Natural killer cell (primary cell): ENCODE measurements at regions of chr14 and their contacts with region 1.

Region 1: GRCh38 chr14:24114536-24115450 is at the starts of genes DCAF11 and NRL:
- DNase-seq: peak; percentile 99
- ATAC-seq: peak; percentile 81 to 94 (median 83)
- H3K4me3 ChIP-seq: peak within 1 kb of the TSS; percentile 62
- H3K4me3 Mint-ChIP-seq: peak within 1 kb of the TSS; percentile 99
- H3K27ac ChIP-seq: peak within 1 kb of the TSS; percentile 100
- H3K27ac Mint-ChIP-seq: peak within 1 kb of the TSS; percentile 96 to 99
- H3K4me1 ChIP-seq: peaks cover 24% of the 10 kb centered on the region
- H3K4me1 Mint-ChIP-seq: peaks cover 22 to 27% of the 10 kb centered on the region in 2 donors
- H3K27me3 ChIP-seq: no peaks in the 10 kb centered on the region
- H3K27me3 Mint-ChIP-seq: no peaks in the 10 kb centered on the region
- CTCF ChIP-seq: no peak
- total RNA-seq, gene DCAF11: 77.5 to 99.3 (median 96.3) TPM
- total RNA-seq, gene NRL: 0.78 to 3.3 (median 2.8) TPM

Region 2: DNA sequence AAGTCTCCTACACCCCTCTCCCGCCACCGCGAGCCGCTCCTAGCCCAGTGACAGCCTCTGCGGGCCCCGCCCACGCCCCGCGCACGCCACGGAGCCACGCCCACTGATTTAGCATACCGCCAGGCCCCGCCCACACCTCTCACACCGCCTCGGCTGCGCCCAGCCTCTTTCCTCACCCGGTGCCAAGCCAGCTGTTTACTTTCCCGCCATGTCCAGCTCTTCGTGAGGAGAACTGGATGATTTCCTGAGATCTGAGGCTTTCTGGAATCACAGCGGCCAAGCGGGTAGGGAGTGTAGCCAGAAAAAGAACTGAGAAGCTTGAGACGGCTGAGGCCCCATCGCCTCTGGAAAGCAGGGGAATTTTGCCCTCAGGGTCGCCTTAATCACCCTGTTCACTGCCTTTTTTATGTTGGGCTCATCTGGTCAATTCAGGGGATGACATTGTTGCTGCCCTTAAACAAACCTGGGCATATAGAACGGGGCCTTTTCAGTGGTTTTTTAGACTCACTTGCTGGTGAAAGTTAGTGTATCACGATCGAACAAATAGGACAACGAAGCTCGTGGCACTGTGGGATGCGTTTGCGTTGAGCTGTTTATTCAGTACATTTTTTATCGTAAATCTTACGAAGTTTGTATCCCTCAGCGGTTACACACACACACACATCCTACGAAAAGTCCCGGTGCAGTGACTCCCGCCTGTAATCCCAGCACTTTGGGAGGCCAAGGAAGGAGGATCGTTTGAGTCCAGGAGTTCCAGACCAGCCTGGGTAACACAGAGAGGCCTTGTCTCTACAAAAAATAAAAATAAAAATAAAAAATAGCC is 876.8 kb before region 1 on chr14 and contains the start of gene RNF212B:
- intact Hi-C with region 1: no loop called
- DNase-seq: peak; percentile 54 to 82
- ATAC-seq: peak; percentile 95 to 100 (median 98)
- H3K4me3 ChIP-seq: no peak within 1 kb of the TSS
- H3K4me3 Mint-ChIP-seq: peak within 1 kb of the TSS; percentile 68
- H3K27ac ChIP-seq: no peak within 1 kb of the TSS
- H3K27ac Mint-ChIP-seq: no peak within 1 kb of the TSS
- H3K4me1 ChIP-seq: peaks cover 7% of the 10 kb centered on the region
- H3K4me1 Mint-ChIP-seq: peaks cover 5 to 6% of the 10 kb centered on the region in 2 donors
- H3K27me3 ChIP-seq: peaks cover 3% of the 10 kb centered on the region
- H3K27me3 Mint-ChIP-seq: peaks cover 12 to 15% of the 10 kb centered on the region in 2 donors
- CTCF ChIP-seq: no peak
- total RNA-seq, gene RNF212B: not detected

Region 3: GRCh38 chr14:24103451-24103850 is 11.3 kb before region 1 on chr14:
- intact Hi-C with region 1: no loop called
- DNase-seq: no peak
- ATAC-seq: no peak
- H3K4me3 ChIP-seq: no peak overlapping the region
- H3K4me3 Mint-ChIP-seq: no peak overlapping the region
- H3K27ac ChIP-seq: no peak overlapping the region
- H3K27ac Mint-ChIP-seq: no peak overlapping the region
- H3K4me1 ChIP-seq: peaks cover 2% of the 10 kb centered on the region
- H3K4me1 Mint-ChIP-seq: peaks cover 1 to 2% of the 10 kb centered on the region in 2 donors
- H3K27me3 ChIP-seq: no peaks in the 10 kb centered on the region
- H3K27me3 Mint-ChIP-seq: no peaks in the 10 kb centered on the region
- CTCF ChIP-seq: no peak

Region 4: GRCh38 chr14:24135834-24136542 is 21.2 kb after region 1 on chr14 and contains the start of gene PSME1:
- intact Hi-C with region 1: loop called (anchors 1 kb)
- DNase-seq: peak; percentile 95 to 97
- ATAC-seq: peak; percentile 95 to 99 (median 97)
- H3K4me3 ChIP-seq: peak within 1 kb of the TSS; percentile 82
- H3K4me3 Mint-ChIP-seq: peak within 1 kb of the TSS; percentile 97
- H3K27ac ChIP-seq: peak within 1 kb of the TSS; percentile 93
- H3K27ac Mint-ChIP-seq: peak within 1 kb of the TSS; percentile 91 to 94
- H3K4me1 ChIP-seq: peaks cover 46% of the 10 kb centered on the region
- H3K4me1 Mint-ChIP-seq: peaks cover 36 to 39% of the 10 kb centered on the region in 2 donors
- H3K27me3 ChIP-seq: no peaks in the 10 kb centered on the region
- H3K27me3 Mint-ChIP-seq: no peaks in the 10 kb centered on the region
- CTCF ChIP-seq: no peak
- total RNA-seq, gene PSME1: 315 to 345 (median 318) TPM

Region 5: DNA sequence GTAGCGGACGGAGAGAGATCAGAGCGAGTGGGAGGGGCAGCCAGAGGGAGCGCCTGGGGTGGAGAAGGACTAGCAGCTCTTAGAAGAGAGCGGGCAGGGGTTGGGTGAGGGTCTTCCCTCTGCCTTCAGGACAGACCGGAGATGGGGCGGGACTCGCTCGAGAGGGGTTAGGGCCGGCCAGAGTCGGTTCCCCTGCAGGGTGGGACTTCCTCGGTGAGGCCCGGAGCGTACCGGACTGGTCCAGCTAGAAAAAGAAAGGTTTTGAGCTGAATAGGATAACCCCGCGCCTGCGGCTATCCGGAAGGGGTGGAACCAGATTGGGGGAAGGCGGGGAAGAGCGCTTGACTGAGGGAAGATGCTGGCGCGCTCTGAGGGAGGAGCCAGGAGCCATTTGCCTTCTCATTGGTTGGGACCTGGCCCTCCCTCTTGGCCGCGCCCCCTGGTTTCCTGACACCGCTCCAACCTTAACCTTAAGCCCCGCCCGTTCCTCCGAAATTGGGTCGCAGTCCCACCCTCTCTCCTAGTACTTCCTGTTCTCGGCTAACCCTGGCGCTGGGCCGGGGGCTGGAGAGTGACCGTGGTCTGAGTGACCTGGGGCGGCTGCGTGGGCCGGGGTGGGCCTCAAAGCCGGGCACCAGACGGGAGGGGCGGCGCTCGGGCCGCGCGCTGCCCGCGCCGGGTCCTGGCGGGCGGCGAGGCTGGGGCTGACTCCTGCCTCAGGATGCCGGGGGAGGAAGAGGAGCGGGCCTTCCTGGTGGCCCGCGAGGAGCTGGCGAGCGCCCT is 32.4 kb after region 1 on chr14 and contains the start of gene RNF31:
- intact Hi-C with region 1: loop called (anchors 1 kb)
- DNase-seq: peak; percentile 95 to 99
- ATAC-seq: peak; percentile 86 to 95 (median 86)
- H3K4me3 ChIP-seq: peak within 1 kb of the TSS; percentile 91
- H3K4me3 Mint-ChIP-seq: peak within 1 kb of the TSS; percentile 97
- H3K27ac ChIP-seq: peak within 1 kb of the TSS; percentile 88
- H3K27ac Mint-ChIP-seq: peak within 1 kb of the TSS; percentile 94
- H3K4me1 ChIP-seq: peaks cover 29% of the 10 kb centered on the region
- H3K4me1 Mint-ChIP-seq: peaks cover 53 to 73% of the 10 kb centered on the region in 2 donors
- H3K27me3 ChIP-seq: no peaks in the 10 kb centered on the region
- H3K27me3 Mint-ChIP-seq: no peaks in the 10 kb centered on the region
- CTCF ChIP-seq: no peak
- total RNA-seq, gene RNF31: 96.9 to 134 (median 125) TPM

Region 6: DNA sequence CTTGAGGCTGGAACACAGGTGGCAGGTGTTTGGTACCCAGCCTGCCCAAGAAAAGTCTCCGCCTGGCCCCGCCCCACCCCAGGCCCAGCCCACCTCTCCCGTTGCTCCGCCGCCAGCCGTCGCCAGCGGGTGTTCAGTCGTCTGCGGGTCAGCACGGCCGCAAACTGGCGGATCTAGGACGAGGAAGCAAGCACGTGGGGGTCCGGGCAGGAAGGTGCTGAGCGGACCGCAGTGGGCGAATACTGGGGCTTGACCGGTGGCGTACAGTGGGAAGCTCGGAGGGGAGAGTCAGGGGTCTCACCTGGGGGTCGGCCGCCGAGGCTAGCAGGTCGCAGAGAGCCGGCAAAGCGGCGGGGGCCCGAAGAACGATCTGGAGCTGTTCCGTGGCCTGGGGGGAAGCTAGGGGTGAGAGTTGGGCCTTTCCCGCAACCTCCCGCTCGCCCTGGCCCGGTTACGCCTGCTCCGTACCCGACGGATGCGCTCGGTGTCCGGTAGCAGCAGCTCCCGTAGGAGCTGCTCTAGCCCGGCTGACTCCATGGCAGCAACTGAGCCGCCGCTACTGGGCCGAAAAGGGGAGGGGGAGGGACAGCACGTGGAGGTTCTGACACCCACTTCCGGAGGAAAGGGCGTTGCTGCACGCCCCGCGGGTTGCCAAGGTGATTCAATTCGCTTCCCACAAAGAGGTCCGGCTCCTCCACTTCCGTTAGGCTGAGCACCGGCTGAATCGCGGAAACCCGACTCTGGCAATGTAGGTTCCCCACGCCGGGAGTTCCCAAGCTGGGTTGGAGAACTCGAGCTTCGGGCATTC is 73.7 kb after region 1 on chr14 and contains the start of gene IPO4:
- intact Hi-C with region 1: loop called (anchors 2 kb)
- DNase-seq: peak; percentile 87 to 98
- ATAC-seq: peak; percentile 92 to 97 (median 93)
- H3K4me3 ChIP-seq: peak within 1 kb of the TSS; percentile 56
- H3K4me3 Mint-ChIP-seq: peak within 1 kb of the TSS; percentile 85
- H3K27ac ChIP-seq: peak within 1 kb of the TSS; percentile 68
- H3K27ac Mint-ChIP-seq: peak within 1 kb of the TSS; percentile 83 to 97
- H3K4me1 ChIP-seq: peaks cover 23% of the 10 kb centered on the region
- H3K4me1 Mint-ChIP-seq: peaks cover 26 to 34% of the 10 kb centered on the region in 2 donors
- H3K27me3 ChIP-seq: no peaks in the 10 kb centered on the region
- H3K27me3 Mint-ChIP-seq: no peaks in the 10 kb centered on the region
- CTCF ChIP-seq: no peak
- total RNA-seq, gene IPO4: 46.2 to 61.5 (median 51.9) TPM

Region 7: DNA sequence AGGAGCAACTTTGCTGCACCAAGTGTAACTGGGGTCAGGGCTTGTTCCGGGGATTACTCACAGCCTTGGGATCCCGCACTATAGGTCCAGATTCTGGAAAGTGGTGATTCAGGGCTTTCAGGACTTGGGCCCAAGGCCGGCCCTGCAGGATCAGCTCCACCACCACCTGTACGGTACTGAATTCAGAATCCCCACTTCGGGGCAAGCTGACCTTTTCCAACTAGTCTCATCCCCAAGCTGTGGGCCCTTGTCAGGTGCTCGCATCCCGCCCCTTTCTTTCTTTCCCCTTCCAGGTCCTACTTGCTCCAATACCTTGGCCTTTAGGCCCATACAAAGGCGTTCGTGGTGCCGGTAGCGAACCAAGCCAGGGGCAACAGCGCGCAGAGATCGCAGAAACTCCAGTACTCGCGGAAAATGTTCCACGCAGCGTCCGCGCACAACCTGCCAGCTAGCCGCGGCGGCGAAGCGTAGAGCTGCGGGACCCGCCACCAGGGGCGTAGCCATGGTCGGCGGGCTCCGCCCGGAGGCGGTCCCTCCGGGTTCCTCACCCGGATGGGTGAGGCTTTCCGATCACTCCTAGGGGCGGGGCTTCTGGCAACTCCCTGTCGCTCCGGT is 127.1 kb after region 1 on chr14:
- intact Hi-C with region 1: loop called (anchors 1 kb)
- DNase-seq: peak; percentile 92 to 97
- ATAC-seq: peak; percentile 79 to 92 (median 79)
- H3K4me3 ChIP-seq: peak overlapping the region; percentile 74
- H3K4me3 Mint-ChIP-seq: peak overlapping the region; percentile 98
- H3K27ac ChIP-seq: peak overlapping the region; percentile 97
- H3K27ac Mint-ChIP-seq: peak overlapping the region; percentile 100
- H3K4me1 ChIP-seq: peaks cover 41% of the 10 kb centered on the region
- H3K4me1 Mint-ChIP-seq: peaks cover 61 to 71% of the 10 kb centered on the region in 2 donors
- H3K27me3 ChIP-seq: no peaks in the 10 kb centered on the region
- H3K27me3 Mint-ChIP-seq: no peaks in the 10 kb centered on the region
- CTCF ChIP-seq: peak; percentile 39

Region 8: DNA sequence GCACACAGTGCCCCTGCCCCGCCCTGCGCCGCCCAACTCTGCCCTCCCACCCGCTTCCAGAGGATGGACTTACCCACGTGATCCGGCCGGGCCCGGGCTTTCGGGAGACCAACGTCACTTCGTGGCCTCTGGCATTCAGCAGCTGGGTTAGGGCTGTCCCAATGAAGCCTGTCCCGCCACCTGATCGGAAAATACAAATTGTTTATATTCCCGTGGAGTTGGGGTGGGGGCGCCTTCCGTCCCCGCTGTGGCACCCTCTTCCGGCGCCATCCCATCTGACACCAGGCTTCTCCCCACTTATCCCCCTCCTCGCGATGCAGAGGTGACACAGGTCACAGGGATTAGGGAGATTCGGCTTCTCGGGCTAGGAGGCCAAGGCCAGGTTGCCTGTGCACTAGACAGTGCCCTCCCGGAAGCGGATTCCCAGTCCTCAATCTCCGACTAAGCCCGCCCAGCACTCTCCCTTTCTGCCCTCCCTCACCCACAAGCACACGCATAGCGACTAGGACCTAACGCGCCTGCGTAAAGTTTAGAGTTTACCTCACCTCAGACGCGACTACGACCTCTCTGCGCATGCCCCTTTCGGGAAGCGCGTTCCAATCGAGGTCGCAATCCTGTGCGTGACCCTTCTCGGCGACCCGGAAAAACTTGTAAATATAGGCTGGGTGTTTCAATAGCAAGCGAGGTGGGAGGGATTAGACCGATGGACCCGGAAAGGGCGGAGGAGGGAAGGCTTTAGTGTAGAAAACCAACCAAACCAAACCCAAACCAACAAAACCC is 327.7 kb after region 1 on chr14 and contains the start of gene SDR39U1:
- intact Hi-C with region 1: loop called (anchors 2 kb)
- DNase-seq: peak; percentile 88 to 100
- ATAC-seq: peak; percentile 88 to 97 (median 92)
- H3K4me3 ChIP-seq: peak within 1 kb of the TSS; percentile 92
- H3K4me3 Mint-ChIP-seq: peak within 1 kb of the TSS; percentile 91
- H3K27ac ChIP-seq: peak within 1 kb of the TSS; percentile 96
- H3K27ac Mint-ChIP-seq: peak within 1 kb of the TSS; percentile 97 to 98
- H3K4me1 ChIP-seq: peaks cover 25% of the 10 kb centered on the region
- H3K4me1 Mint-ChIP-seq: peaks cover 37 to 48% of the 10 kb centered on the region in 2 donors
- H3K27me3 ChIP-seq: no peaks in the 10 kb centered on the region
- H3K27me3 Mint-ChIP-seq: peaks cover 0 to 5% of the 10 kb centered on the region in 2 donors
- CTCF ChIP-seq: no peak
- total RNA-seq, gene SDR39U1: 97.1 to 106 (median 100) TPM